Heart right ventricle (tissue), 16 donors: ENCODE measurements at regions of chr12 and their contacts with region 1.

Region 1: GRCh38 chr12:62640910-62641448 is 174.4 kb downstream of the MON2 start:
- DNase-seq: no peak
- ATAC-seq: no peak
- H3K4me3 ChIP-seq: no peak overlapping the region
- H3K27ac ChIP-seq: no peak overlapping the region
- H3K4me1 ChIP-seq: peaks cover 0 to 12% (median 0%) of the 10 kb centered on the region in 9 donors
- H3K27me3 ChIP-seq: peaks cover 0 to 4% (median 0%) of the 10 kb centered on the region in 7 donors
- CTCF ChIP-seq: no peak

Region 2: GRCh38 chr12:62692884-62693283 is 51.9 kb after region 1 on chr12:
- intact Hi-C with region 1: loop called in 1 of 10 experiments (anchors 10 kb)
- DNase-seq: no peak
- ATAC-seq: peak in 2 of 8 donors; percentile 21 to 32
- H3K4me3 ChIP-seq: no peak overlapping the region
- H3K27ac ChIP-seq: peak overlapping the region in 6 of 10 donors; percentile 13 to 59 (median 41)
- H3K4me1 ChIP-seq: peaks cover 0 to 24% (median 3%) of the 10 kb centered on the region in 9 donors
- H3K27me3 ChIP-seq: no peaks in the 10 kb centered on the region
- CTCF ChIP-seq: no peak